OCI-LY7 (cell line): ENCODE measurements at regions of chr5 and their contacts with region 1.

Region 1: DNA sequence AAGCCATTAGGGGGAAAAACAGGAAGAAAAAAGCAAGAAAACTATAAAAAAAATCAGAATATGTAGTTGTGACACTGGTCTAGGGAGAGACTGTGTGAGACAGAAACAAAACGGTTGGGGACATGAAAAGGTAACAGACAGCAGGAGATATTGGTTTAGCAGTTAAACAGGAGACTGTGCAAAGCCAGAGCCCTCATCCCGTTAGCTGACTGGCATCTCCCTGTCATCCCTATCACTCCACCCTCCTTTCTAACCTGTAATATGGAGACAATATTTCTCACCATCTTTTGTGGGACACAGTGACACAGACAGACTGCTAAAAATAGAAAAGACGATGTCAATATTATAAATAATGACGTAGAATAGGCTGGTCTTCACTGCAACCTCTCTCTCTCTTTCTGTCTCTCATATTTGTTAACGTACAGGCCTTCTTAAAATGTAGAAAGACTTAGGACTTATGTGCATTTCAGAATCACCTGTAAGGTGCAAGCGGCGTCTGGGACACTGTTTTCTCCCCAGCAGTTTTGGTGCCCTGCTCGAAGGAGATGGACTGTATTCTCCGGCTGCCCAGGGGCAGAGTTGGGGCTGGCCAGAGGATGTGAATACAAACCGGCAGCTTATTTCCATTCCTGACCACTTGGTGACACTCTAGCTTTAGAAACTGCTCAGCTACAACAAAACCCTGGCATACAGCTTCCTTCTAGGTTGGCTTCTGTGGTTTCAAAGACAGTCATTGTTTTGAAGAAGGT is 190.6 kb downstream of the MAT2B start:
- DNase-seq: peak; percentile 54
- H3K4me3 ChIP-seq: no peak overlapping the region
- H3K27ac ChIP-seq: no peak overlapping the region
- H3K4me1 ChIP-seq: no peaks in the 10 kb centered on the region
- CTCF ChIP-seq: peak; percentile 82

Region 2: DNA sequence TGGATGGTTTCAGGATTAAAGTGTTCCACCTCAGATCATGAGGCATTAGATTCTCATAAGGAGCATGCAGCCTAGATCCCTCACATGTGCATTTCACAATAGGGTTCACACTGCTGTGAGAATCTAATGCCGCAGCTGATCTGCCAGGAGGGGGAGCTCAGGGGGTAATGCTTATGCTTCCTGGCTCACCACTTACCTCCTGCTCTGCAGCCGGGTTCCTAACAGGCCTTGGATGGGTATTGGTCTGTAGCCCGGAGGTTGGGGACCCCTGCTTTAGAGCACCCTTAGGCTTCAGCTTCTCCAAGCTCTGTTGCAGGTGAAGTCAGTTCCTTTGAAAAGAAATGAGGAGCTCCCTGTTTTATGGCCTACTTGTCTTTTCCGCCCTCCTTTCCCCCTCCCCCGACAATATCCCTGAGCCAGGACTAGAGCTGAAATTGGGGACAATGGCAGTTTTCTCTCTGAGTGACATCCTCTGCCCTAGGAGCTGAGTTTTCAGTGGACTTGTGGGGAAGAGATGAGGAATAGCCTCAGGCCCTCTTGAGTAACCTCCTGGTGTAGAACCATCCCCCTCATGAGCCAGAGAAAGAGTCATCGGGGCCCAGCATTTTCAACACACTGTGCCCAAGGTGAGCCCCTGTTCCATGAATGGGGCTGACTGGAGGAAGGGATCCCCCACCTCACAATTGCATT is 206.8 kb before region 1 on chr5:
- CTCF ChIA-PET with region 1: no interaction called
- POLR2A ChIA-PET with region 1: no interaction called
- intact Hi-C with region 1: no loop called
- DNase-seq: no peak
- H3K4me3 ChIP-seq: no peak overlapping the region
- H3K27ac ChIP-seq: no peak overlapping the region
- H3K4me1 ChIP-seq: no peaks in the 10 kb centered on the region
- CTCF ChIP-seq: peak; percentile 42

Region 3: GRCh38 chr5:164504141-164504772 is 808.3 kb after region 1 on chr5:
- CTCF ChIA-PET with region 1: no interaction called
- POLR2A ChIA-PET with region 1: interaction called, 3 read pairs
- intact Hi-C with region 1: loop called (anchors 1 kb)
- DNase-seq: peak; percentile 55
- H3K4me3 ChIP-seq: no peak overlapping the region
- H3K27ac ChIP-seq: no peak overlapping the region
- H3K4me1 ChIP-seq: no peaks in the 10 kb centered on the region
- CTCF ChIP-seq: peak; percentile 86